ENCODE measurements at regions of chr4 and their contacts with region 1.

Region 1: GRCh38 chr4:122758033-122758432 is 25.5 kb downstream of the BBS12 start:
- DNase-seq: no peak
- H3K4me3 Mint-ChIP-seq: no peak overlapping the region
- H3K27ac Mint-ChIP-seq: no peak overlapping the region
- H3K4me1 Mint-ChIP-seq: peaks cover 18% of the 10 kb centered on the region
- H3K27me3 Mint-ChIP-seq: peaks cover 10% of the 10 kb centered on the region

Region 2: DNA sequence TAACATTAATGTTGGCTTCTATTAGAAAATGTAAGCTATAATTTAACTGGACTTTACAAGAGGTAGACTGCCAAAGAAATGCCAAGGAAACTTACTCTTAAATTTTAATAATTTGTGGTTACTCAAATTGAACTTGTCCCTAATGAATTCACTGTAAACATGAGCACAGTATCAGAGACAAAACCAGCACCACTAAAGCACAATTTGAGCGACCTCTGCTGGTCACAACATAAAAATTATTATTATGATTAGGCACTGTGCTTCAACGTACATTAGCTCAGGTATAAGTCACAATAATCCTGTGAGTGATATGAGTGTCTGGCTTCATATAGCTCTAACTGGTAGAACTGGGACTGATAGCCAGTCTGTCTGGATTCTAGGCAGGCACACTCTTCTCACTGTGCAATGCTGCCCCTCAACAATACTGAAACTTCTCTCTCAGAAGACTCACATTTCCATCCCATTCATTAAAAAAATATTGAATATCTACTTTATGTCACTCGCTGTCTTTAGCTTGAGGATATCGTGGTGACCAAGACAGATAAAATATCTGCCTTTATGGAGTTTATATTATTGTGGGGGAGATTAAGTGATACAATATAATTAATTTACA is 156.4 kb after region 1 on chr4:
- CTCF ChIA-PET with region 1: interaction called, 19 read pairs
- intact Hi-C with region 1: loop called (anchors 1 kb)
- DNase-seq: no peak
- H3K4me3 Mint-ChIP-seq: no peak overlapping the region
- H3K27ac Mint-ChIP-seq: no peak overlapping the region
- H3K4me1 Mint-ChIP-seq: no peaks in the 10 kb centered on the region
- H3K27me3 Mint-ChIP-seq: no peaks in the 10 kb centered on the region

Region 3: DNA sequence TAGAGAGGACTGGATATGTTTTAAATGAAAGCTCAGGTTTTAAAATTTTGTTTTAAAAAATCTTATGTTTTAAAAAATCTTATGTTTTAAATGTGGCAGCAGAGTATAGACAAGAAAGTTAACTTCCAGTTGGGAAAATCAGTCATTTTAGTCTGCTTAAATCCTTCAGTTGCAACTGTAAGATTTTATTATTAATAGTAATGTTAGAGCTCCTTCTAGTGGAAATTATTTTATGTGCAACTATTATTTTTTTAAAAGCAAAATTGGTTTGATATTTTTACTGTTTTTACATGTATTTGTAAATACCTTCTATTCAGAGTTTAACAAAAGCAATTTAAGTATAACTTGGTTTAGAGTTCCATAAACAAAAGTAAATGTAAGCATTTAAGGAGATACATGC is 172.8 kb after region 1 on chr4:
- CTCF ChIA-PET with region 1: interaction called, 41 read pairs
- intact Hi-C with region 1: loop called (anchors 1 kb)
- DNase-seq: no peak
- H3K4me3 Mint-ChIP-seq: no peak overlapping the region
- H3K27ac Mint-ChIP-seq: no peak overlapping the region
- H3K4me1 Mint-ChIP-seq: peaks cover 4% of the 10 kb centered on the region
- H3K27me3 Mint-ChIP-seq: no peaks in the 10 kb centered on the region

Measured in activated naive CD4-positive, alpha-beta T cell treated with anti-CD3 and anti-CD28 coated beads for 36 hours (primary cell).